Vagina (tissue), 2 donors: ENCODE measurements at regions of chr17 and their contacts with region 1.

Region 1: GRCh38 chr17:66673668-66674315 is 161.1 kb upstream of the CACNG5 start:
- DNase-seq: no peak
- H3K4me3 ChIP-seq: no peak overlapping the region
- H3K27ac ChIP-seq: peak overlapping the region; percentile 84
- H3K4me1 ChIP-seq: peaks cover 35% of the 10 kb centered on the region
- H3K27me3 ChIP-seq: no peaks in the 10 kb centered on the region
- CTCF ChIP-seq: peak; percentile 23 to 80 (median 78)
- POLR2A ChIP-seq: no peak

Region 2: GRCh38 chr17:66255112-66255511 is 418.7 kb before region 1 on chr17:
- intact Hi-C with region 1: loop called (anchors 10 kb)
- DNase-seq: no peak
- H3K4me3 ChIP-seq: no peak overlapping the region
- H3K27ac ChIP-seq: no peak overlapping the region
- H3K4me1 ChIP-seq: no peaks in the 10 kb centered on the region
- H3K27me3 ChIP-seq: no peaks in the 10 kb centered on the region
- CTCF ChIP-seq: peak; percentile 44 to 73 (median 72)
- POLR2A ChIP-seq: no peak